ENCODE measurements at regions of chr5 and their contacts with region 1.

Region 1: GRCh38 chr5:173498286-173498685 is 118.2 kb downstream of the BOD1 start:
- DNase-seq: no peak
- H3K4me3 ChIP-seq: peak overlapping the region in 1 of 4 donors; percentile 6
- H3K27ac ChIP-seq: peak overlapping the region; percentile 55 to 87 (median 80)
- H3K4me1 ChIP-seq: peaks cover 0 to 58% (median 52%) of the 10 kb centered on the region in 4 donors
- H3K27me3 ChIP-seq: no peaks in the 10 kb centered on the region
- CTCF ChIP-seq: no peak
- EP300 ChIP-seq: peak in 1 of 4 donors; percentile 28
- POLR2A ChIP-seq: no peak

Region 2: GRCh38 chr5:173293817-173294672 is 204.2 kb before region 1 on chr5:
- intact Hi-C with region 1: loop called (anchors 5 kb)
- DNase-seq: peak; percentile 81
- H3K4me3 ChIP-seq: peak overlapping the region in 1 of 4 donors; percentile 21
- H3K27ac ChIP-seq: no peak overlapping the region
- H3K4me1 ChIP-seq: peaks cover 0 to 25% (median 24%) of the 10 kb centered on the region in 4 donors
- H3K27me3 ChIP-seq: no peaks in the 10 kb centered on the region
- CTCF ChIP-seq: peak; percentile 86 to 95 (median 92)
- EP300 ChIP-seq: no peak
- POLR2A ChIP-seq: no peak

Region 3: GRCh38 chr5:173573126-173573960 is 75.1 kb after region 1 on chr5:
- intact Hi-C with region 1: loop called (anchors 5 kb)
- DNase-seq: peak; percentile 84
- H3K4me3 ChIP-seq: no peak overlapping the region
- H3K27ac ChIP-seq: peak overlapping the region in 1 of 4 donors; percentile 20
- H3K4me1 ChIP-seq: peaks cover 0 to 20% (median 10%) of the 10 kb centered on the region in 4 donors
- H3K27me3 ChIP-seq: no peaks in the 10 kb centered on the region
- CTCF ChIP-seq: peak; percentile 86 to 98 (median 90)
- EP300 ChIP-seq: no peak
- POLR2A ChIP-seq: no peak

Region 4: DNA sequence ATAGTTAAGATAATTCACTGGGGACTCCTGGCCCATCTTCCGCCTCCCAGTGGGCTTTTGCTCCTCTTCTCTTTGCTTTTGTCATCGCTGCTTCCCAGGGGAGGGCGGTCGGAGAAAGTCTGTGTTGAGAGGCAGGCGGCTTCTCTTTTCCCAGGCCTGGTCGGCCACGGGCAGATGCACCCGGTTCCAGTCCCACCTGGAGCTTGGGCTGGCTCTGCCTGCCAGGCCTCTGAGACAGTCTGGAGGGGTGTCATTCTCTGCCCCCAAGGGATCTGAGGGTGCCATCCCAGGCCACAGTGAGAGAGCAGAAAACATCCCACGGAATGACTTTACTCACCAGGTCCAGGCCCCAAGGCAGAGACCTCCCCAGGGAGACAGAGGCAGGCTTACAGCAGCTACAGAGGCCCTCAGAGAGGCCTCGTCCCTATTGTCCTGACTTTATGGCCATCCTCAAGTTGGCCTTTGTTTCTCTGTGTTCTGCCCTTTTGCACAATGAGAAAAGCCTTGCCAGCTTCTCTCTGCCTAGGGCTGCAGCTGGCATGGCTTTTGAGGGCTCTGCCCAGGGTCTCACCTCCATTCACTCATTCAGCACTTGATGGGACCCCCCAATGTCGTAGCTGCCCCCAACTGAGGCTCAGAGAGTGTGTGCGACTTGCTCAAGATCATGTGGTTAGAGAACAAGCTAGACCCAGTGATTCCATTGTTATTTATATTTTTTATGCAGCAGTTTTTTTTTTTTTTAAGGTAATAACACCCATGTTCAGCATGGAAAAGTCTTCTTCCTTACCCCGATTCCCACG is 162.4 kb after region 1 on chr5:
- intact Hi-C with region 1: no loop called
- DNase-seq: no peak
- H3K4me3 ChIP-seq: no peak overlapping the region
- H3K27ac ChIP-seq: no peak overlapping the region
- H3K4me1 ChIP-seq: no peaks in the 10 kb centered on the region
- H3K27me3 ChIP-seq: no peaks in the 10 kb centered on the region
- CTCF ChIP-seq: no peak
- EP300 ChIP-seq: no peak
- POLR2A ChIP-seq: no peak